Calu3 (cell line): ENCODE measurements at regions of chr4 and their contacts with region 1.

Region 1: GRCh38 chr4:88211473-88212252 is 53.2 kb upstream of the ABCG2 start:
- DNase-seq: peak; percentile 47
- H3K4me3 Mint-ChIP-seq: no peak overlapping the region
- H3K27ac Mint-ChIP-seq: no peak overlapping the region
- H3K4me1 Mint-ChIP-seq: peaks cover 10% of the 10 kb centered on the region
- H3K27me3 Mint-ChIP-seq: peaks cover 27% of the 10 kb centered on the region
- CTCF ChIP-seq: no peak

Region 2: GRCh38 chr4:87985097-87985886 is 226.4 kb before region 1 on chr4:
- CTCF ChIA-PET with region 1: no interaction called
- intact Hi-C with region 1: loop called (anchors 2 kb)
- DNase-seq: peak; percentile 79
- H3K4me3 Mint-ChIP-seq: no peak overlapping the region
- H3K27ac Mint-ChIP-seq: peak overlapping the region; percentile 68
- H3K4me1 Mint-ChIP-seq: peaks cover 23% of the 10 kb centered on the region
- H3K27me3 Mint-ChIP-seq: no peaks in the 10 kb centered on the region
- CTCF ChIP-seq: peak; percentile 54

Region 3: GRCh38 chr4:88033309-88033708 is 178.4 kb before region 1 on chr4:
- CTCF ChIA-PET with region 1: interaction called, 21 read pairs
- intact Hi-C with region 1: loop called (anchors 1 kb)
- DNase-seq: peak; percentile 42
- H3K4me3 Mint-ChIP-seq: no peak overlapping the region
- H3K27ac Mint-ChIP-seq: no peak overlapping the region
- H3K4me1 Mint-ChIP-seq: no peaks in the 10 kb centered on the region
- H3K27me3 Mint-ChIP-seq: no peaks in the 10 kb centered on the region
- CTCF ChIP-seq: no peak

Region 4: GRCh38 chr4:88054901-88055300 is 156.8 kb before region 1 on chr4:
- CTCF ChIA-PET with region 1: interaction called, 12 read pairs
- intact Hi-C with region 1: loop called (anchors 1 kb)
- DNase-seq: peak; percentile 10
- H3K4me3 Mint-ChIP-seq: no peak overlapping the region
- H3K27ac Mint-ChIP-seq: no peak overlapping the region
- H3K4me1 Mint-ChIP-seq: no peaks in the 10 kb centered on the region
- H3K27me3 Mint-ChIP-seq: no peaks in the 10 kb centered on the region
- CTCF ChIP-seq: no peak

Region 5: GRCh38 chr4:88366460-88366859 is 154.8 kb after region 1 on chr4:
- CTCF ChIA-PET with region 1: no interaction called
- intact Hi-C with region 1: loop called (anchors 5 kb)
- DNase-seq: no peak
- H3K4me3 Mint-ChIP-seq: no peak overlapping the region
- H3K27ac Mint-ChIP-seq: no peak overlapping the region
- H3K4me1 Mint-ChIP-seq: no peaks in the 10 kb centered on the region
- H3K27me3 Mint-ChIP-seq: no peaks in the 10 kb centered on the region
- CTCF ChIP-seq: no peak